ENCODE measurements at regions of chr7 and their contacts with region 1.

Region 1: GRCh38 chr7:128236924-128237586 is 4.0 kb upstream of the LEP start:
- DNase-seq: no peak
- H3K4me3 ChIP-seq: no peak overlapping the region
- H3K27ac ChIP-seq: no peak overlapping the region
- H3K4me1 ChIP-seq: no peaks in the 10 kb centered on the region
- H3K27me3 ChIP-seq: no peaks in the 10 kb centered on the region
- CTCF ChIP-seq: no peak
- EP300 ChIP-seq: no peak
- POLR2A ChIP-seq: no peak
- RAD21 ChIP-seq: no peak

Region 2: GRCh38 chr7:128200376-128200775 is 36.7 kb before region 1 on chr7:
- CTCF ChIA-PET with region 1: no interaction called
- POLR2A ChIA-PET with region 1: no interaction called
- DNase-seq: no peak
- H3K4me3 ChIP-seq: peak overlapping the region in 1 of 4 experiments; percentile 71; a peak in 1 of 8 replicates
- H3K27ac ChIP-seq: no peak overlapping the region
- H3K4me1 ChIP-seq: peaks cover 0 to 7% (median 6%) of the 10 kb centered on the region in 4 experiments; a peak in 6 of 7 replicates
- H3K27me3 ChIP-seq: peaks cover 15 to 42% (median 37%) of the 10 kb centered on the region in 4 experiments
- CTCF ChIP-seq: no peak
- EP300 ChIP-seq: no peak
- POLR2A ChIP-seq: no peak
- RAD21 ChIP-seq: no peak

Region 3: GRCh38 chr7:128221929-128222403 is 15.1 kb before region 1 on chr7:
- CTCF ChIA-PET with region 1: interaction called, 16 read pairs
- POLR2A ChIA-PET with region 1: no interaction called
- DNase-seq: no peak
- H3K4me3 ChIP-seq: no peak overlapping the region
- H3K27ac ChIP-seq: no peak overlapping the region
- H3K4me1 ChIP-seq: no peaks in the 10 kb centered on the region
- H3K27me3 ChIP-seq: no peaks in the 10 kb centered on the region; a peak in 1 of 7 replicates
- CTCF ChIP-seq: no peak
- EP300 ChIP-seq: no peak
- POLR2A ChIP-seq: no peak
- RAD21 ChIP-seq: no peak

Region 4: GRCh38 chr7:128247676-128248194 is 10.7 kb after region 1 on chr7:
- CTCF ChIA-PET with region 1: interaction called, 16 read pairs
- POLR2A ChIA-PET with region 1: interaction called, 3 read pairs
- DNase-seq: no peak
- H3K4me3 ChIP-seq: no peak overlapping the region
- H3K27ac ChIP-seq: no peak overlapping the region
- H3K4me1 ChIP-seq: no peaks in the 10 kb centered on the region
- H3K27me3 ChIP-seq: no peaks in the 10 kb centered on the region; a peak in 1 of 7 replicates
- CTCF ChIP-seq: no peak
- EP300 ChIP-seq: no peak
- POLR2A ChIP-seq: no peak
- RAD21 ChIP-seq: no peak

Region 5: GRCh38 chr7:128335734-128336133 is 98.7 kb after region 1 on chr7:
- CTCF ChIA-PET with region 1: no interaction called
- POLR2A ChIA-PET with region 1: no interaction called
- DNase-seq: no peak
- H3K4me3 ChIP-seq: no peak overlapping the region
- H3K27ac ChIP-seq: no peak overlapping the region
- H3K4me1 ChIP-seq: no peaks in the 10 kb centered on the region
- H3K27me3 ChIP-seq: no peaks in the 10 kb centered on the region
- CTCF ChIP-seq: no peak
- EP300 ChIP-seq: no peak
- POLR2A ChIP-seq: no peak
- RAD21 ChIP-seq: no peak